H1 (cell line): ENCODE measurements at regions of chr2 and their contacts with region 1.

Region 1: GRCh38 chr2:75480971-75481836 is 79.5 kb downstream of the EVA1A start:
- DNase-seq: no peak
- H3K4me3 ChIP-seq: no peak overlapping the region
- H3K27ac ChIP-seq: no peak overlapping the region
- H3K4me1 ChIP-seq: peaks cover 0 to 4% (median 0%) of the 10 kb centered on the region in 4 experiments; a peak in 1 of 7 replicates
- H3K27me3 ChIP-seq: no peaks in the 10 kb centered on the region
- CTCF ChIP-seq: peak in 2 of 3 experiments; percentile 33 to 69; a peak in 3 of 4 replicates
- EP300 ChIP-seq: no peak
- POLR2A ChIP-seq: no peak
- RAD21 ChIP-seq: peak; percentile 20 to 47; a peak in 3 of 4 replicates

Region 2: DNA sequence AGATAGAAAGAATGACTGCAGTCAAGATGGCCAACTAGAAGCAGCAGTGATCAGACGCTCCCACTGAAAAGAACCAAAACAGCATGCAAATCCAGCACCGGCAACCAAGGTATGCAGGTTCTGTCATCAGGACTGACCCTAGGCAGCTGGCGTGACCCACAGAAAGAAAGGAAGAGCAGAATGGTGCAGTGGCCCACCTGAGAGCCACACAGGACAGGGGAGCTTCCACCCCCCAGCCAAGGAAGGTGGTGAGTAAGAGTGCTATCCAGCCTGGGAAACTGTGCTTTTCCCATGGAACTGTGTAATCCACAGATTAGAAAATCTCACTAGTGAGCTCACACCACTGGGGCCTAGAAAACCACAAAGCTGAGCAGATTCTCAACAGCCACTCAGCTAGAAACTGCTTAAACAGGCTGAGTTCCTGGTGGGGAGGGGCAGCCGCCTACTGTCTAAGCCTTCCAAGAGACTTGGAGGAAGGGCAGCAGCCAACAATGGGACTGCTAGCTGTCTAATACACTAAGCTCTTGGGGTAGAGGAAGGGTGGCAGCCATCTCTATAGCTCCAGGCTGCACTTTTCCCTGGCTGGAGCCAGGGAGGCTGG is 48.3 kb before region 1 on chr2:
- CTCF ChIA-PET with region 1: no interaction called
- POLR2A ChIA-PET with region 1: no interaction called
- DNase-seq: no peak
- H3K4me3 ChIP-seq: no peak overlapping the region
- H3K27ac ChIP-seq: no peak overlapping the region
- H3K4me1 ChIP-seq: peaks cover 4 to 20% (median 6%) of the 10 kb centered on the region in 4 experiments; a peak in 5 of 7 replicates
- H3K27me3 ChIP-seq: no peaks in the 10 kb centered on the region
- CTCF ChIP-seq: no peak
- EP300 ChIP-seq: no peak
- POLR2A ChIP-seq: no peak
- RAD21 ChIP-seq: no peak

Region 3: GRCh38 chr2:75491129-75491753 is 10.0 kb after region 1 on chr2:
- CTCF ChIA-PET with region 1: interaction called, 11 read pairs
- POLR2A ChIA-PET with region 1: no interaction called
- DNase-seq: no peak
- H3K4me3 ChIP-seq: no peak overlapping the region
- H3K27ac ChIP-seq: no peak overlapping the region
- H3K4me1 ChIP-seq: peaks cover 0 to 2% (median 0%) of the 10 kb centered on the region in 4 experiments; a peak in 2 of 7 replicates
- H3K27me3 ChIP-seq: no peaks in the 10 kb centered on the region
- CTCF ChIP-seq: no peak
- EP300 ChIP-seq: no peak
- POLR2A ChIP-seq: no peak
- RAD21 ChIP-seq: no peak